ENCODE measurements at regions of chr20 and their contacts with region 1.

Region 1: DNA sequence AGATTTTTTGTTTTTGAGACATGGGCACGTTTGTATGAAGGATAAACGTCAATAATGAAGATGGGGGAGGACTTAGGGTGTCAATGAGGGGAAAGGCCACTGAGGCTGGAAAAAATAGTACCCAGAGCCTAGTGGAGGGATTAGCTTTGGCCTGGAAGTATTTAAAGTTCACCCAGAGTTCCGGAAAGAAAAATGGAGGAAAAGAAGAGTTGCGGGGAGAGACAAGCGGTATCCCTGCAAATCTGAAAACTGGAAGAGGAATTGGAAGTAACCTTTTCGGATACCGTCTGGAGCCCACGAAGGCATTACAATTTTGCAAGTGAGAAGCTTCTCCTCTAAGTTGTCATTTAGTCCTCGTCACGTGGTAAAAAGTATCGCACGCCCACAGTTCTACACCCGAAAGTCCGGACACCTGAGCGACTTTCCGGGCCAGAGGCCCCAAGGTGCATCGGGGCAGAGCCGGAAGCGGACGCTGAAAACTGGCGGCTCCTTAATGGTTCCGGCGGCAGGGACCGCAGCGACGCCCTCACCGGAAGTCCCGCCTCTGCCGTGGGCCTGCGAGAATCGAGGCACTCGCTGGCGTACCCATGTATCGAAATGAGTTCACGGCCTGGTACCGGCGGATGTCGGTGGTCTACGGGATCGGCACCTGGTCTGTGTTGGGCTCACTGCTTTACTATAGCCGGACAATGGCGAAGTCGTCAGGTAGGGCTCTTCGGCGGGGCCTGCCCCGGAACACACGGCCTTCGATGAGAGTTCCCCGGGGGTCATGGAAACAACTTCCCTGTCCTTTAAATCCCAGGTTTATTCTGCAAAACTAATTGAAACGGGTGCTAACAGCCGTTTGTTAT is at the start of gene SMIM26:
- DNase-seq: peak; percentile 94
- H3K4me3 Mint-ChIP-seq: peak within 1 kb of the TSS; percentile 100
- H3K27ac Mint-ChIP-seq: peak within 1 kb of the TSS; percentile 97
- H3K4me1 Mint-ChIP-seq: peaks cover 19% of the 10 kb centered on the region
- H3K27me3 Mint-ChIP-seq: no peaks in the 10 kb centered on the region
- CTCF ChIP-seq: no peak
- total RNA-seq, gene SMIM26: 106 and 127 TPM in 2 replicates

Region 2: GRCh38 chr20:18496740-18497592 is 70.2 kb before region 1 on chr20 and contains the start of gene RBBP9:
- CTCF ChIA-PET with region 1: no interaction called
- POLR2A ChIA-PET with region 1: interaction called, 36 read pairs
- intact Hi-C with region 1: no loop called
- DNase-seq: peak; percentile 83
- H3K4me3 Mint-ChIP-seq: peak within 1 kb of the TSS; percentile 91
- H3K27ac Mint-ChIP-seq: peak within 1 kb of the TSS; percentile 87
- H3K4me1 Mint-ChIP-seq: no peaks in the 10 kb centered on the region
- H3K27me3 Mint-ChIP-seq: no peaks in the 10 kb centered on the region
- CTCF ChIP-seq: no peak
- total RNA-seq, gene RBBP9: 6.8 and 7.3 TPM in 2 replicates

Region 3: DNA sequence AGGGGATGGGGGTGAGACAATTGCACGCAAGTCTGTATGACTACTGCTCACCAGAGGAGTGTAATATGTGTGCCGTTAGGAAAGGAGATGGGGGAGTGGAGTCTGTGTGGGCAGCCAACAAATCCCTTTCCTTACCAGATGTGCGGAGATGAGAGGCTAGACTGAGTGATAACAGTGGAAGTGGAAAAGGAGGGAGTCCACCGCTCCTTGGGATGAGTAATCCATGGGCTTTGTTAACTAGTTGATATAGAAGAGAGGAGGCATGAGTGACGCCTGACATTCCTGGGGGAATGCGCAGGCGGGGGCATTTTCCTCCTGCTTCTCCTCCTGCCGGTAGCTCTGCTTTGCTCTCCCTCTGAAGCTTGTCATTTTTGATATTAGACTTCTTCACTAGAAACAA is 13.4 kb before region 1 on chr20:
- CTCF ChIA-PET with region 1: interaction called, 3 read pairs
- POLR2A ChIA-PET with region 1: interaction called, 17 read pairs
- intact Hi-C with region 1: no loop called
- DNase-seq: no peak
- H3K4me3 Mint-ChIP-seq: no peak overlapping the region
- H3K27ac Mint-ChIP-seq: no peak overlapping the region
- H3K4me1 Mint-ChIP-seq: no peaks in the 10 kb centered on the region
- H3K27me3 Mint-ChIP-seq: no peaks in the 10 kb centered on the region
- CTCF ChIP-seq: no peak

Region 4: DNA sequence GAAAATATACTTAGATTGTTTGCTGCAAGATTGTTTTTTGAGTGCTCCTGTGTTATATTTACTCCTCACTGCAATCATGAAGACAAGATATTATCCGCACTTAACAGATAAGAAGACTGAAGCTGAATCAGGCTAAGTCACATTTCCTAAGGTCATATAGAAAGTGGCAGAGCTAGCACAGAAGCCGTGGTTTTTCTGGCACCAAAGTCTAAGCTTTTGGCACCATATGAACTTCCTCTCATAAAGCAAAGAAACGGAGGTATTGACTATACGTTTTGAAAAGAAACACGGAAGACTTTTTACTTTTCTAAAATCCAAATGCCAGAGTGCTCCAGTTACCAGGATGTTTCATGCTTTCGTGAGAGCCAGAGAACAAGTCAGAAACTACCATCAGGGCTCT is 11.5 kb after region 1 on chr20:
- CTCF ChIA-PET with region 1: interaction called, 8 read pairs
- POLR2A ChIA-PET with region 1: interaction called, 10 read pairs
- intact Hi-C with region 1: no loop called
- DNase-seq: no peak
- H3K4me3 Mint-ChIP-seq: no peak overlapping the region
- H3K27ac Mint-ChIP-seq: peak overlapping the region; percentile 70
- H3K4me1 Mint-ChIP-seq: no peaks in the 10 kb centered on the region
- H3K27me3 Mint-ChIP-seq: no peaks in the 10 kb centered on the region
- CTCF ChIP-seq: no peak

Region 5: DNA sequence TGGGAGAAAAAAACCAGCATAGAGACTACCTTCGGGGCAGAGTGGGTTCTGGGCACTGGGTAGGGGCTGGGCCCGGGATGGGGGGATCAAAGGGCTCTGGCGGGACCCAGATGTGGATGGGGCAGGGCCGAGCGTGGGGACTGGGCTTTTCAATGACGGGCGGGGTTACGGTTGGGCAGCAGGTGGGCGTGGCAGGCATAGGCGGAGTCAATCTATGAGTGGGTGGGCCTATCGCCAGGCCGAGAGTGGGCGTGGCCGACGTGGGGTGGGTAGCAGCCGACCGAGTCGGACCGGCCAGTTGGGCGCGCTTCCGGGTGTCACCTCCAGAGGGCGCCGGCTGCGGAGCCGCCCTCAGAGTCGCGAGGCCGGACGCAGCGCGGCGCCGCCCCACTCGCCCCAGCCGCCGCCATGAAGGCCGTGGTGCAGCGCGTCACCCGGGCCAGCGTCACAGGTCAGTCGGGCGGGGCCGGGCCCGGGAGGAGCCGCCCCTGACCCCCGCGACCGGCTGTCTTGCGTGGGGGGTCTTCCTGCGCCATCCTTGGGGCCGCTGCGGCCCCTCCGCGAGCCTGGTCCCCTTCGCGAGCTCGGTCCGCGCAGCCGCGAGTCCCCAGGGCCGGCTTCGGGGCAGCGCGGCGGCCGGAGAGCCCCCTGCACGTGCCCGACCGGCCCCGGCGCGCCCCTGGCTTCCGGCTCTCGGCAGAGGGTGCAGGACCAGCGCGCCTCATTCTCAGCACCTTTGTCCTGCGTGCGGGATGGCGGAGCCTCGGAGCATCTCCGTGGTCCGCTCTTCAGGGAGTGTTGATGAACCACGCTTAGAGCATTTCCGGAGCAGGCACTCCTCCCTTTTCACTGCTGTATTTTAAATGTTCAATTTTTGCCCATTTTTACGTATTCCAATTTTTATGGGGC is 20.8 kb after region 1 on chr20 and contains the start of gene DTD1:
- CTCF ChIA-PET with region 1: interaction called, 6 read pairs
- POLR2A ChIA-PET with region 1: interaction called, 25 read pairs
- intact Hi-C with region 1: no loop called
- DNase-seq: peak; percentile 89
- H3K4me3 Mint-ChIP-seq: peak within 1 kb of the TSS; percentile 89
- H3K27ac Mint-ChIP-seq: peak within 1 kb of the TSS; percentile 96
- H3K4me1 Mint-ChIP-seq: peaks cover 18% of the 10 kb centered on the region
- H3K27me3 Mint-ChIP-seq: no peaks in the 10 kb centered on the region
- CTCF ChIP-seq: peak; percentile 73
- total RNA-seq, gene DTD1: 101 and 113 TPM in 2 replicates